ENCODE measurements at regions of chr1 and their contacts with region 1.

Region 1: GRCh38 chr1:9476790-9477463 is 62.3 kb upstream of the SLC25A33 start:
- DNase-seq: no peak
- H3K4me3 ChIP-seq: no peak overlapping the region
- H3K27ac ChIP-seq: no peak overlapping the region
- H3K4me1 ChIP-seq: peaks cover 4% of the 10 kb centered on the region
- H3K27me3 ChIP-seq: no peaks in the 10 kb centered on the region
- CTCF ChIP-seq: no peak
- EP300 ChIP-seq: no peak
- POLR2A ChIP-seq: no peak

Region 2: DNA sequence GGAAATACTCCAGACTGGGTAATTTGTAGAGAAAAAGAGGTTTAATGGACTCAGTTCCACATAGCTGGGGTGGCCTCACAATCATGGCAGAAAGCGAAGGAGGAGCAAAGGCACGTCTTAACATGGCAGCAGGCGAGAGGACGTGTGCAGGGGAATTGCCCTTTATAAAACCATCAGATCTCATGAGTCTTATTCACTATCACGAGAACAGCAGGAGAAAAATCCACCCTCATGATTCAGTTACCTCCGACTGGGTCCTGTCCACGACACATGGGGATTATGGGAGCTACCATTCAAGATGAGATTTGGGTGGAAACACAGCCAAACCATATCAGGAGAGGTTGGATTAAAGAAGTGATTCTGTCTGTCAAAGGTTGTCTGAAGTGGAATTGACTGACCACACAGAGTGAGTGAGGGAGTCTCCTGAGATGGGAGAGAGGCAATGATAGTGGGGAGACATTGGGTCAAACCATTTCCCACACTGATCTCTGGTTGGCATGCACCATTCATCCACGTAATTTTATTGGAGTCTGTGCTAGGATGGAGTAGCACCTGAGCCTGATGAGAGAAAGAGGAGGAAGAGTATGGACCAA is 1764.1 kb before region 1 on chr1:
- intact Hi-C with region 1: loop called in 1 of 4 experiments (anchors 5 kb)
- DNase-seq: no peak
- H3K4me3 ChIP-seq: no peak overlapping the region
- H3K27ac ChIP-seq: no peak overlapping the region
- H3K4me1 ChIP-seq: no peaks in the 10 kb centered on the region
- H3K27me3 ChIP-seq: no peaks in the 10 kb centered on the region
- CTCF ChIP-seq: no peak
- EP300 ChIP-seq: no peak
- POLR2A ChIP-seq: no peak